Left ventricle myocardium superior (tissue), 1 donor: ENCODE measurements at regions of chr3 and their contacts with region 1.

Region 1: GRCh38 chr3:194769020-194769643 is 83.4 kb downstream of the FAM43A start:
- DNase-seq: peak; percentile 93
- ATAC-seq: peak; percentile 97

Region 2: GRCh38 chr3:194691481-194692283 is 77.5 kb before region 1 on chr3:
- intact Hi-C with region 1: loop called (anchors 10 kb)
- DNase-seq: no peak
- ATAC-seq: no peak

Region 3: GRCh38 chr3:194871143-194871863 is 102.2 kb after region 1 on chr3:
- intact Hi-C with region 1: loop called (anchors 10 kb)
- DNase-seq: peak; percentile 69
- ATAC-seq: peak; percentile 68

Region 4: DNA sequence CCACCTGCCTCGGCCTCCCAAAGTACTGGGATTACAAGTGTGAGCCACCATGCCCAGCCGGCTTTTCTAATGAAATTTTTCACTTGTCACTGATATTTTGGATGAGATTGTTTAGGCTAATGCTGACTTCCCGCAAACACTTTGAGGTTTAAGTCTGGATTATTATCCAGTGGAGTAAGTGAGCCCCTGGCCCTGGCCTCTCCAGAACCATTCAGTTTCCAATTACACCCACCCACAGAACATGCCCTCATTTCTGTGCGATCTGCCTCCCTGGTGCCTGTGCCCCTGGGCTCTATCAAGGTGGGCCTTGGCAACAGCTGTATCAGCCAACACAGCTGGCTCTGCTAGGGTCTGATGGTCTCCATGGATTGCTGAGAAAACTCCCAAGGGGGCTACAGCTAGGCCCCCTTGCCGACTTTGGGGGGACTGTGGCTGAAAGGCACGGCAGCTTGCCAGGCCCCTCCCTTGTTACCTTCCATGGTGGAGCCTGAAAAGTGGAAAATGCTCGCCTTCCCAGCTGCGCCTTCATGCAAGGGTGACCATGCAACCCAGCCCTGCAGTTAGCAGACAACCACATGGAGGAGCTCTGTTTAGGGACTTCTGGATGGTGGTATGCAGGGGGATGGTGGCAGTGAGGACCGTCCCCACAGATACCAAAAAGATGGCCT is 205.5 kb after region 1 on chr3:
- intact Hi-C with region 1: no loop called
- DNase-seq: no peak
- ATAC-seq: no peak

Region 5: DNA sequence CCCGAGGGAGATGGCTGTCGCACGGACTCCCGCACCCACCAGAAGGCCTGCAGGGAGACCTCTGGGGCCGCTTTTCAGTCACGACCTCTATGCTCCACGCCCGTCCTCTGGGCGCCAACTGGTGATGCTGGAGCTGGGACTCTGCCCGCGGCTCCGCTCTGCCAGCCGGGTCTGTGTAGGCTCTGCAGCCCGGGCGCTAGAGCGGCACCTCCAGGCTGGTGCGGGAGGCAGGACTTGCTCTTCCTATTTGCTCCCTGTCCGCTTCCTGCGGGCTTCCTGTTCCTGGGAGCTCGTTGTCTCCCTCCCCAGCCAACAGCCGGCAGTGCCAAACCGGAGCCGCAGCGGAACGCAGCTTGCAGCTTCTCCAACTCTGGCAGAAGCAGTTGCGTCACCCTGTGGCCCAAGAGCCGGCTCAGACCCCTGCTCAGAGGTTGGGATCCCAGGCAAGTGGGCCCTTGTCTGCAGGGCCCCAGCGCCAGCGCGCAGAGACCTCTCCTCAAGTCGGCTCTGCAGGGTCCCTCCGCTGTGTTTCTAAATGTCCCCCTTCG is 216.0 kb after region 1 on chr3:
- intact Hi-C with region 1: no loop called
- DNase-seq: peak; percentile 87
- ATAC-seq: peak; percentile 95